RWPE1 (cell line): ENCODE measurements at regions of chr15 and their contacts with region 1.

Region 1: DNA sequence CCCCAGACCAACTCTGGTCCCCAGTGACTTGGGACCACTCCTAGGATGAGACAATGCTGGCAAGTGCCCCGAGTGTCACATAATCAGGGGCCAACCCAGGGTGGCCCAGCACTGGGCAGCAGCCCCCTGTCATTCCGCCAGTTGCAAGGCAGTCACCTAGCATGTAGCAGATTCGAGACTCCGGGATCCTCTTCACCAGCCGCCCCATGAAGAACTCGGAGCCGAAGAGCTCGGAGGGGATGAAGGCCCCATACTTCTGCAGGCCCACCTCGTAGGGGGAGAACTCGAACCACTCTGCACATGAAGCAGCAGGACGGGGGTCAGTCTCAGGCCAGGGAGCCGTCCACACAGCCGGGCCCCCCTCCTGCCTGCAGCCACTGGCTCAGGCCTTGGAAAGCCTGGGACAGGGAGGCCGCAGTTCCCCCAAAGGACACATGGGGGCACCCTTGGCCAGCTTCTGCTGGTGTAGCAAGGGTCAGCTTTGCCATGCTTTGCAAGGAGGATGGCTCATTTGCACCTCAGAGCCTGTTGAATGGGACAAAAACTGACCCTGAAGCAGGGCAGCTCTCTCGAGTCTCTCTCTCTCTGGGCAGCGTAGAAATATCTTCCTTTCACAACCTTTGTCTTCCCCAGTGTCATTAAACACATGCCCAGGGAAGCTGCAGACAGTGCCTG is 17.0 kb upstream of the EHD4 start:
- DNase-seq: peak; percentile 87
- H3K27ac ChIP-seq: no peak overlapping the region
- CTCF ChIP-seq: peak; percentile 99

Region 2: DNA sequence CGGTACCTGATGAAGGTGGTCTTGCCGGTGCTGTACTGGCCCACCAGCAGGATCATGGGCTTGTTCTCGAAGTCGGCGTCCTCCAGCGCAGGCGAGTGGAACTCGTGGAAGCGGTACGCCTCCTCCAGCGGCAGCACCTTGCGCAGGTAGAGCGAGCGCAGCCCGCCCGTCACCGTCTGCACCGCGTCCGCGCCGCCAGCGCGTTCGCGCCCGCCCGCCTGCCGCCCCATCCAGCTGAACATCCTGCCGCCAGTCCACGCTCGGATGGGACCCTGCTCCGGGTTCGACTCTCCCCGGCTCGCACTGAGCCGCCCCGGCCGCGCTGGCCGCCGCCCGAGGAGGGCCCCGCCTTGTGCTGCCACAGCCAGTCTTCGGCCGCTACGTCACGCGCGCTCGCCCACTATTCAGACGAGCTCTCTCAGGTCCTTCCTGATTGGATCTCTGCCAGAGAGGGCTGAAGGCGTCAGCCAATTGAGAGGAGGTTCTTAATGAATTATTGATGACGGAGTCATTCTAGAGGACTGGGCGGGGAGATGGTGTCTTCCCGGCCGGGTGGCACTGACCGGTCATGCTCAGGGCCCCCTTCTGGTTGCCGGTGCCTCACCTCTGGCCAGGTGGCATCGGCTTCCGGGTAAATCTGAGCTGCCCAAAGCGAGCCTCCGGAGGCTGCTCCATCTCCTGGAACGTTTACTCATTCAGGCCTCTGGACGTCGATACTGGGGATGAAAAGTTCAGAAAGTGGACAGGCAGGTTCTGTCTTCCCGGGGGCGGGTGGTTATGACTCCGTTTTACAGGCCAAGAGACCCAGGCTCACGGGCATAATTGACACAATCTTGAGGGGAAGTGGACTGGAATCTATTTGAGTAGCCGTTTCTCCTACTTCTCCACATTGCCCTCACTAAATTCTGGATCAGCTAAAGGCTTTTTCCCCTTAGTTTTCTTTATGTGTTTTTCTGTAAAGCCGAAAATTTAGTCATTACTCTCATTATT is 16.8 kb before region 1 on chr15 and contains the start of gene EHD4:
- CTCF ChIA-PET with region 1: interaction called, 10 read pairs
- POLR2A ChIA-PET with region 1: no interaction called
- DNase-seq: peak; percentile 99
- H3K27ac ChIP-seq: peak within 1 kb of the TSS; percentile 80
- CTCF ChIP-seq: peak; percentile 64

Region 3: GRCh38 chr15:42050484-42051255 is 61.3 kb after region 1 on chr15:
- CTCF ChIA-PET with region 1: interaction called, 26 read pairs
- POLR2A ChIA-PET with region 1: no interaction called
- DNase-seq: no peak
- H3K27ac ChIP-seq: no peak overlapping the region
- CTCF ChIP-seq: no peak

Region 4: DNA sequence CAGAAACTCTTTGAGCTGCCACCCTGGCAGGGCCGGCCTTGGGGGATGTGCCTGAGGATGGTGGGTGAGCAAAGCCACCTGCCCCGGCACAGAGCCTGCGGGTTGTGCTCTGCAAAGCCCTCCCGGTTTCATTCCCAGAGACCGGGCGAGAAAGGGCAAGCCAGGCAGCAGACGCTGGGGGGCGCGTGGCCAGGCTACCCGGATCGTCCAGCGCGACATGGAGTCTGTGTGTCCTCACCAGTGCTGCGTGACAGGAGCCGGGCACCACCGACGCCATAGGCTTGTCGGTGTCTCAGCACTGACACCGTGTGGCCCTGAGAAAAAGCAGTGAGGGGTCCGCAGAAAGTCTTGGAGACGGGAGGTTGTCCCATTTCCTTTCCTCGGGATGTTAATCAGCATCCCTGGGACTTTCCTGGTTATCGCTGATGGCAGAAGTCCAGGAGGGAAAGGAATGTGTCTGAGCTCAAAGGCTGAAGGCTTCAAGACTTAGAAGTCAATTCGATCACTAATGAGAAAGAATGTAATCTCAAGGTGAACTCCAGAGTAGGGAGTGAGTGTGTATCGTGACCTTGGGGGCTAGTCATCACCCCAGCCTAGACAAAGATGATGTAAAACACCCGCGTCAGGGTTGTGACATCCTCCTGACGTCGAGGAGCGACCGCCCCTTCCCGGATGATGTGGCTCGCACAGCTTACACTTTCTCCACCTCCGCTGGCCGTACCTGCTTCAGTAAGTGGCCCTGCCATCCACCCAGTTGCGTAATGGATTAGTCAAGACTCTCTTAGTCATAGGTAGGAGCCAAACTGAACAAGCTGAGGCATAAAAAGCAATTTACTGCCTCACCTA is 67.8 kb after region 1 on chr15:
- CTCF ChIA-PET with region 1: interaction called, 26 read pairs
- POLR2A ChIA-PET with region 1: interaction called, 5 read pairs
- DNase-seq: peak; percentile 98
- H3K27ac ChIP-seq: peak overlapping the region; percentile 98
- CTCF ChIP-seq: peak; percentile 91

Region 5: GRCh38 chr15:42065033-42065432 is 75.6 kb after region 1 on chr15:
- CTCF ChIA-PET with region 1: interaction called, 13 read pairs
- POLR2A ChIA-PET with region 1: interaction called, 5 read pairs
- DNase-seq: no peak
- H3K27ac ChIP-seq: peak overlapping the region; percentile 6; the same call in 1 of the 2 replicates
- CTCF ChIP-seq: no peak

Region 6: GRCh38 chr15:42084460-42085235 is 95.3 kb after region 1 on chr15:
- CTCF ChIA-PET with region 1: interaction called, 24 read pairs
- POLR2A ChIA-PET with region 1: no interaction called
- DNase-seq: peak; percentile 93
- H3K27ac ChIP-seq: peak overlapping the region; percentile 55
- CTCF ChIP-seq: peak; percentile 99

Region 7: DNA sequence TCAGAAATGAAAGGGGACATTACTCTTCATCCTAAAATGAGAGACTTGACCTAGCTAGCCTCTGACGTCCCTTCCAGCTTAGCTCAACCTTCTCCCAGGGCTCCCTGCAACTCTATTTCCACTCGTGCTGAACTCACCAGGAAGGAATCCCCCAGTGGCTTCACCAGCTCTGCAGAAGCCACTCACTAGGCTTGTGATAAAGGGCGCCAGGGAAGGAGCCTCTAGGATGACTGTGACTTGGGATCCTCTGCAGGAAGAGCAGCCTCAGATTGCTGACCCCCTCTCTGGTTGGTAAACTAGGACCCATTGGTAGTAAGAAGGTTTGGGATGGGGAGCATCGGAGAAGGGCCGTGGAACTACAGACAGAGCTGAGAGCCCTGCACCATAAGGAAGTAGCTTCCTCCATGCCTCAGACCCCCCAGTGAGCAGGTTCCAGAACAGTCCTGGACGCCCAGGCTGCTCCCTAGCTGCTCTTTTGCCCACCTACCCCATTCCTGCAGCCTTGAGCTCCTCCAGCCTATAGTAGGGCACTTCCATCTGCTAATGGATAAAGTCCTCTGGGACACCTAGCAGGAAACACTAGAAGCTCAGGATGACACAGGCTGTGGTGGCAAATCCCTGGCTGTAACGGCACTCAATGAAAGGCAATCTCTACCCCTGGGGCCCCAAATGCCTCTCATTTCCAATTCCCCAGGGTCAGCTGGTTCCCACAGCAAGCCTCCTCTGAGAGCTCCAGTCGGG is 141.0 kb after region 1 on chr15:
- CTCF ChIA-PET with region 1: interaction called, 10 read pairs
- POLR2A ChIA-PET with region 1: no interaction called
- DNase-seq: no peak
- H3K27ac ChIP-seq: no peak overlapping the region
- CTCF ChIP-seq: no peak